Endothelial cell of umbilical vein (primary cell): ENCODE measurements at regions of chr1 and their contacts with region 1.

Region 1: GRCh38 chr1:236530959-236531358 is 7.2 kb downstream of the LGALS8 start:
- DNase-seq: no peak
- H3K4me3 ChIP-seq: no peak overlapping the region
- H3K27ac ChIP-seq: no peak overlapping the region
- H3K4me1 ChIP-seq: peaks cover 14% of the 10 kb centered on the region
- H3K27me3 ChIP-seq: no peaks in the 10 kb centered on the region
- CTCF ChIP-seq: no peak
- POLR2A ChIP-seq: no peak

Region 2: DNA sequence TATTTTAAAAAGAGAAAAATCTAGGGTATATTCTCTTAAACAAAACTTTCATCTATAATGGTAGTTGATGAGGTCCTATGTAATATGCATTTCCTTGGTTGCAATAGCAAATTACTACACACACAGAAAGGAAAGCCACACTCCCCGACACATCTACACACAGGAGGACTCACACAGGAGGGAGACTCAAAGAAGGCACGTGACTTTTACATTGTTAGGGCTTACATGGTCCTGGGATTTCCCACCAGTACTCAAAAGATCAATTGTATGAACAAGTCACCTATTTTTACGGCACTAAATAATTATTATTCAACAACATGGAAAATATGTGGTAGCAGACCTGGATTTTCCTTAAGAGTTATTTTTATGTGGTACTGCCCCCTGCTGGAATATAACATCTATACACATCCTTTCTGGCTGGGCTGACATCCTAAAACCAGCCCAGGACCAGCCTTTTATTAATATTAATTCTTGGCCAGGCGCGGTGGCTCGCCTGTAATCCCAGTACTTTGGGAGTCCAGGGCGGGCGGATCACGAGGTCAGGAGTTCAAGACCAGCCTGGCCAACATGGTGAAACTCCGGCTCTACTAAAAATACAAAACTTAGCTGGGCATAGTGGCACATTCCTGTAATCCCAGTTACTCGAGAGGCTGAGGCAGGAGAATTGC is 41.1 kb before region 1 on chr1:
- CTCF ChIA-PET with region 1: no interaction called
- POLR2A ChIA-PET with region 1: no interaction called
- dilution Hi-C with region 1: no loop called
- intact Hi-C with region 1: loop called (anchors 2 kb)
- DNase-seq: peak; percentile 37
- H3K4me3 ChIP-seq: no peak overlapping the region
- H3K27ac ChIP-seq: no peak overlapping the region
- H3K4me1 ChIP-seq: no peaks in the 10 kb centered on the region
- H3K27me3 ChIP-seq: no peaks in the 10 kb centered on the region
- CTCF ChIP-seq: peak; percentile 33 to 46
- POLR2A ChIP-seq: no peak

Region 3: GRCh38 chr1:236511735-236512418 is 19.1 kb before region 1 on chr1:
- CTCF ChIA-PET with region 1: no interaction called
- POLR2A ChIA-PET with region 1: no interaction called
- dilution Hi-C with region 1: no loop called
- intact Hi-C with region 1: no loop called
- DNase-seq: no peak
- H3K4me3 ChIP-seq: no peak overlapping the region
- H3K27ac ChIP-seq: no peak overlapping the region
- H3K4me1 ChIP-seq: no peaks in the 10 kb centered on the region
- H3K27me3 ChIP-seq: peaks cover 2 to 8% of the 10 kb centered on the region in 2 experiments
- CTCF ChIP-seq: no peak
- POLR2A ChIP-seq: no peak